Common myeloid progenitor, CD34-positive (primary cell): ENCODE measurements at regions of chr3 and their contacts with region 1.

Region 1: GRCh38 chr3:71681224-71681668 is 44.0 kb downstream of the EIF4E3 start:
- DNase-seq: peak; percentile 67 to 85 (median 80)
- H3K4me3 ChIP-seq: peak overlapping the region in 2 of 7 experiments; percentile 21 to 25
- H3K27ac ChIP-seq: no peak overlapping the region
- H3K4me1 ChIP-seq: peaks cover 3 to 17% (median 11%) of the 10 kb centered on the region in 4 experiments
- H3K27me3 ChIP-seq: no peaks in the 10 kb centered on the region

Region 2: DNA sequence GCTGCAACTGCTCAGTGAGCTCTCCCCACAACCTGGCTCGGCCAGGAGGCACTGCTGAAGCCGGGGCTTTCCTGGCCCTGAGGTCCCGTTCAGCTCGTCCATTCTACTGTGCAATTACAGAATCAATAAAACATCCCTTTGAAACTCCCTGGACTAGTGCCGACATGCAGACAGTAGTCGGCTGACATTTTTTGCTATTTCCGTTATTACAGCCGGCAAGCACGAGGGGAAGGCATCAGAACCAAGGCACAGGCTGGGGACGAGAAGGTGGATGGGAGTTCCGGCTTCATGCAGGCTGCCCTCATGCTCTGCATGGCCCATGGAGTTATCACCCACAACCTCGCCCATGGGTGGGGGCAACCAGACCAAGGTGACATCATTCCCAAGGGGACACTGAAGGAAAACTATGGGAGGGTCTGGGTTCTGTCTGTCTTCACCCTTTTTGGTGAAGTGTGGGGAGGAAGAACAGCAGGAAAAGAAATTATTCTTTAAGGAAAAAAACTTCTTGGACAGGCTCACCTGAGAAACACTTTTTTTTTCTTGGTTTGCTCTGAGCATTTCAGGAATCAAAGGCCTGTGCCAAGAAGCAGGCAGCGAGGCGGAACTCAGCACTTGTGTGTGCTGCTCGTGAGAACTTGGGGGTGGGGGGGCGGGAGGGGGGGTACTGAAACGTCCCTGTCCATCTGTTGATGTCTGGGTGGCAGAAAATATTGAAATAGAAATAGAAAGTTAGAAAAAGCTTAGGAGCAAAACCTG is 252.2 kb before region 1 on chr3:
- CTCF ChIA-PET with region 1: no interaction called
- POLR2A ChIA-PET with region 1: no interaction called
- DNase-seq: peak; percentile 72 to 81 (median 79)
- H3K4me3 ChIP-seq: peak overlapping the region in 2 of 7 experiments; percentile 25 to 43
- H3K27ac ChIP-seq: peak overlapping the region; percentile 74 to 86
- H3K4me1 ChIP-seq: peaks cover 5 to 79% (median 44%) of the 10 kb centered on the region in 4 experiments
- H3K27me3 ChIP-seq: no peaks in the 10 kb centered on the region

Region 3: DNA sequence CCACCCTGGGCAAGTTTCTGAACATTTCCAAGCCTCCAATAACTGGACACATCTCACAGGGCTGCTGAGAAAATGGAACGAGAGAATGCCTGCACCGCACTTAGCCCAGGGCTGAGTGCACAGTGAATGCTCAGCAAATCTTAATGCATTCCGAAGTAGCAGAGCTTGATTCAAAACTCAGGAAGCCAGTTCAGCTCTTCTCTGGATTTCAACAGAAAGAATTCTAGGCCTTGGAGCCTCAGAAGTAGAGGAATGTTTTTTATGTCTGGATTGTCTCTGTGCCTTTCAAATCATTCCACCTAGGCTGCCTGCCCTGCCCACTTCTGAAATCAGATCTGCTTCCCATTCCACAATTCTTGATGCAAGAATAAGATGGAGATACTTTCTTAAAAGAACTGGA is 88.2 kb before region 1 on chr3:
- CTCF ChIA-PET with region 1: no interaction called
- POLR2A ChIA-PET with region 1: no interaction called
- DNase-seq: no peak
- H3K4me3 ChIP-seq: no peak overlapping the region
- H3K27ac ChIP-seq: no peak overlapping the region
- H3K4me1 ChIP-seq: peaks cover 0 to 7% (median 3%) of the 10 kb centered on the region in 4 experiments
- H3K27me3 ChIP-seq: no peaks in the 10 kb centered on the region

Region 4: GRCh38 chr3:71694358-71694999 is 13.2 kb after region 1 on chr3:
- CTCF ChIA-PET with region 1: interaction called, 21 read pairs
- POLR2A ChIA-PET with region 1: no interaction called
- DNase-seq: no peak
- H3K4me3 ChIP-seq: no peak overlapping the region
- H3K27ac ChIP-seq: no peak overlapping the region
- H3K4me1 ChIP-seq: no peaks in the 10 kb centered on the region
- H3K27me3 ChIP-seq: no peaks in the 10 kb centered on the region